ENCODE measurements at regions of chr10 and their contacts with region 1.

Region 1: DNA sequence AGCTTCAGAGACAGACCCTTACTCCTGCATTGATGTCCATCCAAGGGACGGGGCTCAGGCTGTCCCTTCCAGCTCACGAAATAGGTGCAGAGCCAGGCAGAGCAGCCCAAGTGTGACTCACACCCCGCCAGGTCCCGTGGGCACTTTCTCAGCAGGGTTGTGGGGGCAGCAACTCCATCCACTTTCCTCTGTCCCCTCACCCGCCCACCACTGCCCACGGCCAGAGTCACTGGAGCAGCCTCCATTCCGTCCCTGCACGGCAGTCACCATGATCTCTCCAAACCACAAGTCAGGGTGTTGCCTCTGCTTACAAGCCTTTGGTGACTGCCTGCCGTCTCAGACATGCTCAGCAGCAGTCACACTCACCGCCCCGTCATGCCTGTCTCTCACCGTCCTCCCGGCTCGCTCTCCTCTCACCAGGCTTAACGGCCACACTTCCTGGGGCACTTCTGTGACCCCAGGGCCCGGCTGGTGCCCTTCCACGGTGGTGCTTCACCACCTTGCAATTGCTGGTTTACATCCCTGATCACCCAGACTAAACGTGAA is 39.3 kb downstream of the CALML3 start:
- DNase-seq: peak in 6 of 10 donors; percentile 24 to 69 (median 31)
- ATAC-seq: peak; percentile 81 to 82
- H3K4me3 Mint-ChIP-seq: peak overlapping the region; percentile 71 to 93 (median 82)
- H3K27ac Mint-ChIP-seq: peak overlapping the region; percentile 95 to 99 (median 98)
- H3K4me1 Mint-ChIP-seq: peaks cover 15 to 23% (median 19%) of the 10 kb centered on the region in 4 donors
- H3K27me3 Mint-ChIP-seq: peaks cover 0 to 3% (median 0%) of the 10 kb centered on the region in 5 donors

Region 2: DNA sequence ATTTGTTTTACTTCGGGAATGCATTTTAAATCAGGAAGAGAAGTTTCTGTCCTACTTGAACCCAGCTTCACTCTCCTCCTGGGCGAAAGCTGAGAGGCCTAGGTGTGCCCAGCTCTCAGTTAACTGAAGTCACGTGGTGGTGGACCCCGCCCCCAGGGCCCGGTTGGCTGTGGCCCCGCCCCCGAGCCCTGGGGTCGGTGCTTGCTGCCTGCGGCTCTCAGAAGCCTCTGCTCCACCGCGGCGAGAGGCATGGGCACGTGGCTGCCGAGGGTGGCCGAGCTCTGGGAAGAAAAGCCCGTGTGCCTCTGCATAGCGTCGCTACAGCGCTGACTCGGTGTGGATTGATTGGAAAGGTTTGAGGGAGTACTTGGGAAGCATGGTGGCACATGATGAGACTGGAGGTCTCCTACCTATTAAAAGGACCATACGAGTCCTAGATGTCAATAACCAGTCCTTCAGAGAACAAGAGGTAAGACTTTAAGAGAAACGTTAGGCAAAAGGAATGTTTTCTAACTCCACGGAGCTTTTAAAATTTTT is 117.6 kb before region 1 on chr10:
- POLR2A ChIA-PET with region 1: interaction called, 39 read pairs
- DNase-seq: peak; percentile 53 to 87 (median 75)
- ATAC-seq: peak; percentile 78 to 89
- H3K4me3 Mint-ChIP-seq: peak overlapping the region; percentile 76 to 94 (median 89)
- H3K27ac Mint-ChIP-seq: peak overlapping the region; percentile 49 to 95 (median 85)
- H3K4me1 Mint-ChIP-seq: peaks cover 10 to 36% (median 24%) of the 10 kb centered on the region in 4 donors
- H3K27me3 Mint-ChIP-seq: no peaks in the 10 kb centered on the region

Region 3: DNA sequence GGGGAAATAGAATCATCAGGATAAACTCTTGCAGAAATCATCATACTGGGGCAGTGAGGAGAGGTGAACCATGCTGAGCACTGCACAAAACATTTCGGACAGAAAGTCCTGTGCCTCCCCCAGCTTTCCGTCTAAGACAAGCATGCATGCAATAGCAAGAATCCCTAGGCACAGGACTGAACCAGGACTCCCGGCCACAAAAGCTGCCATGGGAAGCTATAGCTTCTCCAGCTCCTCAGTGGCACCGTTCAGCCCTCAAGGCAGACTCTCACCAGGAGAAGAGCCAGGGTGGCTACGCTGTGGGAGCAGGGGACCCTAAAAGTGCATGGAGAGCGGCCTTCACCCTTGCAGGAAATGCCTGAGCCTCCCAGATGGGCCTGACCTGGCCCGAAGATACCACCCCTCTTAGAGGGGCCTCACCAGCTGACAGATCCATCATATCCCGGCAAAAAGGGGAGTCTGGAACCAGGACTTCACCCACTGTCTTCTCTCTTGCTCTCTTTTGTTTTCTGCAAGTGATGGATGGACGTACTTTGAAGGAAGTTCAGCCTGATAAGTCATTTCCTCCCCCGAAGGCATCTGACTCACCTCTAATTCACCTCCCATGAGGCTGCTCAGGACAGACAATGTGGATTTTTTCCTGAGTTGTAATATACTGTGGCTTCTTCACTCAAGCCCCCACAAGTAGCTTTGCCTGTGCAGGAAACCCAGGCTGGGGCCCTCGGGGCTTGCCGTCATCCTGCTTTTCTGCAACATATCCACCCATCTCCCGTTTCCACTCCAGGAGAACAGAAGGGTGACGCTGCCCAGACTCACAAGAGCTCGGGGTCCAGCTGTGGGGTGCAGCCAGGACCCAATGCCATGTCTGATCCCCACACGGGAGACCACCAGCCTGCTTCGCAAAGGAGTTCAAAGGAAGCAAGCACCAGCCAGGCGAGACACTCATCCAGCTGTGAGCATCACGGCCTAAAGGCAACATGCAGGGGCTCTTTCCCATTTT is 31.8 kb after region 1 on chr10:
- POLR2A ChIA-PET with region 1: no interaction called
- DNase-seq: no peak
- ATAC-seq: no peak
- H3K4me3 Mint-ChIP-seq: no peak overlapping the region
- H3K27ac Mint-ChIP-seq: peak overlapping the region in 1 of 10 donors; percentile 3
- H3K4me1 Mint-ChIP-seq: peaks cover 6 to 15% (median 9%) of the 10 kb centered on the region in 4 donors
- H3K27me3 Mint-ChIP-seq: peaks cover 2 to 19% (median 11%) of the 10 kb centered on the region in 5 donors

Region 4: DNA sequence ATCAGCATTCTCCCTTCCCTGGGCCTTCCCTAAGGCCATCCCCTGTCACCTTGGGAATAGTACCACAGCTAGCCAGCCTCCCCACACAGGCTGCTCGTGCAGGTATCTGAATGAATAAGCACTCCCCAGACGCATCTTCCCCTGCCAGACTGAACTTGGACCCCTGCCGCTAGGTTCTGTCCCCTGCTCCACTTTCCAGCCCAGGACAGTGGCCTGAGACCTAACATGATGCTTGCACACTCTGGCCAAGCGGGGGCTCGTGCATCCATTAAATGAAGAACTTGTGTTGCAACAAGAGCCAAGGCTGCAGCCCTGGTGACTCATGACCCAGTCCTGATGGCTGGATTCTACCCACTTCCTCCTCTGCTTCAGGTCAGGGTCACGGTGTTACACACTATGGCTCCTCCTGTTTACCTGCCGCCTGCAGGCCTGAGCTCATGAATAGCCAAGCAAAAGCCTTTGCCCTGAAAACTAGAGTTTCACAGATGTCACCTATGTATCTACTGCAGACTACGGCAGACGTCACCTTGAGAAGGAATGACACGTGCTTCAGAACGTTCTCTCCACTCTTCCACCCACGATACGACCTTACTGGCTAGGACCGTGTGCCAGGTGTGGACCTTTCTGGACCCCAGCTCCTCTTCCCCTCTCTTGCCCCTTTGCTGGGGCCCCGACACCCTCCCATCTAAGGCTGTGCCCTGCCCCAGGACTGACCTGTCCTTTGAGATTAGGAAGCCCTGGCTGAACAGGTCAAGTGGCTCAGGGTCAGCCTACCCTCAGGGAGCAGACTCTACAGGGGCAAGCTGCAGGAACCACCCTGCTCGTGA is 95.9 kb after region 1 on chr10:
- POLR2A ChIA-PET with region 1: no interaction called
- DNase-seq: no peak
- ATAC-seq: no peak
- H3K4me3 Mint-ChIP-seq: no peak overlapping the region
- H3K27ac Mint-ChIP-seq: peak overlapping the region in 3 of 10 donors; percentile 66 to 87 (median 83)
- H3K4me1 Mint-ChIP-seq: peaks cover 28 to 66% (median 39%) of the 10 kb centered on the region in 4 donors
- H3K27me3 Mint-ChIP-seq: no peaks in the 10 kb centered on the region